ENCODE measurements at regions of chr6 and their contacts with region 1.

Region 1: DNA sequence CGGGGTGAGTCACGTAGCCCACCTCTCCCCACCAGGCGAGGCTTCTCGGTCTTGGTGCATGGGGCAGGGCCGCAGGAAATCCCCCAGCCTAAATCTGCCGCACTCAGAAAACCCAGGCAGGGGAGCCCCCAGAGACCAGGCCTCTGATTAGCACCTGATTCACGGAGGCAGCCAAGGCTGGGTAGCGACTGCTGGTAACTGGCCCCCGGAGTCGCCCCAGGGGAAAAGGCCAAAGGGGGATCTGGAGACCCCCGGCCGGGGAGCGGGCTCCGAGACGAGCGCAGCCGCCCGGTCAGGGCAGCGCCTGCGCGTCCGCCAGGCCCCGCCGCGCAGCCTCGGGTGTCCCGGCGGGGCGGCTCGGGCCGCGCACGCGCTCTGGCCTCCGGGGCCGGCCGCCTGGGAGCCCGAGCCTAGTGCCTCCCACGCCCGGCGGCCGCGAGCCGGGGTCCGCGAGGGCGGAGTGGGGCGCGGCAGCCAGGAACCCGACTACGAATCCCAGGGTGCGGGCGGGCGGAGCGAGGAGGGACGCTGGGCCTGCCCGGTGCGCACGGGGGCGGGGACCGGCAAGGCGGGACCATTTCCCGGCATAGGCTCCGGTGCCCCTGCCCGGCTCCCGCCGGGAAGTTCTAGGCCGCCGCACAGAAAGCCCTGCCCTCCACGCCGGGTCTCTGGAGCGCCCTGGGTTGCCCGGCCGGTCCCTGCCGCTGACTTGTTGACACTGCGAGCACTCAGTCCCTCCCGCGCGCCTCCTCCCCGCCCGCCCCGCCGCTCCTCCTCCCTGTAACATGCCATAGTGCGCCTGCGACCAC is at the start of gene DUSP22:
- DNase-seq: peak; percentile 100
- CTCF ChIP-seq: no peak

Region 2: GRCh38 chr6:305371-306206 is 13.7 kb after region 1 on chr6:
- CTCF ChIA-PET with region 1: interaction called, 23 read pairs
- POLR2A ChIA-PET with region 1: interaction called, 4 read pairs
- DNase-seq: peak; percentile 93
- CTCF ChIP-seq: no peak

Region 3: GRCh38 chr6:313087-313486 is 21.2 kb after region 1 on chr6:
- CTCF ChIA-PET with region 1: interaction called, 23 read pairs
- POLR2A ChIA-PET with region 1: no interaction called
- DNase-seq: no peak
- CTCF ChIP-seq: no peak

Region 4: GRCh38 chr6:436308-437036 is 144.6 kb after region 1 on chr6:
- CTCF ChIA-PET with region 1: no interaction called
- POLR2A ChIA-PET with region 1: no interaction called
- DNase-seq: no peak
- CTCF ChIP-seq: no peak

Region 5: GRCh38 chr6:658244-658643 is 366.3 kb after region 1 on chr6:
- CTCF ChIA-PET with region 1: no interaction called
- POLR2A ChIA-PET with region 1: no interaction called
- DNase-seq: no peak
- CTCF ChIP-seq: no peak